ENCODE measurements at regions of chr22 and their contacts with region 1.

Region 1: GRCh38 chr22:23178512-23179254 is 1.6 kb upstream of the BCR start:
- DNase-seq: peak; percentile 76
- ATAC-seq: peak; percentile 62

Region 2: DNA sequence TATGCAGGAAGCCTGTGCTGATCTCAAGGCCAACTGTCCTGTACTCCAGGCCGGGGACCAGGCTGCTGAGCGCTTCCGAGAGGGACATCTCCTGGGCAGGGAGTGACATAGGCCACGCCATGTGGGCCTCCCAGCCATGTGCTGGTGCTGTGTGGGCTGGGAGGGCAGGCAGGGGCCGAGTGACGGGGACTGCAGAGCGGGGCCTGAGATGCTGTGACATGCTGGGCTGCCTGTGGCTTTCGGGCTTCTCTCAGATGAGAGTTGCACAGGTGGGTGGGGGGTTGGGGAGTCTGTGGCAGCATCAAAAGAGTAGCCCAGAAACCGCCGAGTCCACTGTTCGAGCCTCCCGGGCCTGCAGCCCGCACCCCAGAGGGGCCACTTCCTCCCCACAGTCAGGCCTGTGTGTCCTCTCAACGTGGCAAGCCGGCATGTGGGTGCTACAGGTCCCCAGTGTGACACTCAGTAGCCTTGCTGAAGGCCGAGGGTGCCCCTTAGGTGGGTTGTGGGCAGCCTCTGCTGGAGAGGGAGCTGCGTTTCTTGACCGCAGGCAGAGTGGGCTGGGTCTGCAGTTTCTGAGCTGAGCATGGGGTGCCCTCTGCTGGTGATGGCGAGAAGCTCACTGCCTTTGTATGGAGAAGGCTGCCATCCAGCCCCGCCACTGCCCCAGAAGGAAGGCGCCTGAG is 102.9 kb after region 1 on chr22:
- intact Hi-C with region 1: loop called (anchors 2 kb)
- DNase-seq: peak; percentile 90
- ATAC-seq: peak; percentile 83